Calu3 (cell line): ENCODE measurements at regions of chr17 and their contacts with region 1.

Region 1: DNA sequence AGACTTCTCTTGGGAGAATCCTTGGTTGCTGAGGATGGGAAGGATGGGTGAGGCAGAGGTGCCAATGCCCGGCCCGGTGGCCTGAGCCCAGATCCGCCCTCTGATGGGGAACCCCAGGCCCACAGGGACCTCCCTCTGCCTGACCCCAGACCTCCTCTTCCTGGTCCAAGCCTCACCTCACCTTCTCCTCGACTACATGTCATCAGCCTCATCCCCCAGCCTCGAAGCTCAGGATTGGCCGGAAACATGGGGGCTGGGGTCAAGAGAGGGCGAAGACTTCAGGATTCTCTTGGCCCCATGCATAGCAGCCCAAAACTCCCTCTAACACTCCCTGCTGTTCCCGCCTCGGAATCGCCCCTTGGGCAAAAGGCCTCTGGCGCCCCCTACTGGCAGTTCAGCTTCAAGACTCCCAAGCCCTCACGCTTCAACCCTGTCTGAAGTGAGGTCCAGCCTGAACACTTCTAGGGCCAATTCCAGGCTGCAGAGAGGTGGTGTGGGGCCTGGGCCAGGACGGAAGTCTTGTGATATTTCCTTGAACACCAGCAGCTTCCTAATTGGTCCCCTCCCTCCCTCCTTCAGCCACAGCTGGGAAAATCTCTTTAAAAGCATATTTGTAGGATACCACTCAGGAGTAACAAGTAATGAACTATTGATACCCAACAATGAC is 47.2 kb downstream of the ARHGAP27 start:
- DNase-seq: peak; percentile 97
- H3K4me3 Mint-ChIP-seq: no peak overlapping the region
- H3K27ac Mint-ChIP-seq: no peak overlapping the region
- H3K4me1 Mint-ChIP-seq: peaks cover 35% of the 10 kb centered on the region
- H3K27me3 Mint-ChIP-seq: peaks cover 22% of the 10 kb centered on the region
- CTCF ChIP-seq: peak; percentile 100

Region 2: GRCh38 chr17:45098869-45099616 is 286.4 kb before region 1 on chr17:
- CTCF ChIA-PET with region 1: no interaction called
- intact Hi-C with region 1: no loop called
- DNase-seq: peak; percentile 95
- H3K4me3 Mint-ChIP-seq: no peak overlapping the region
- H3K27ac Mint-ChIP-seq: peak overlapping the region; percentile 8
- H3K4me1 Mint-ChIP-seq: peaks cover 6% of the 10 kb centered on the region
- H3K27me3 Mint-ChIP-seq: no peaks in the 10 kb centered on the region
- CTCF ChIP-seq: peak; percentile 98

Region 3: GRCh38 chr17:45218895-45219661 is 166.4 kb before region 1 on chr17:
- CTCF ChIA-PET with region 1: interaction called, 6 read pairs
- intact Hi-C with region 1: loop called (anchors 1 kb)
- DNase-seq: peak; percentile 95
- H3K4me3 Mint-ChIP-seq: no peak overlapping the region
- H3K27ac Mint-ChIP-seq: no peak overlapping the region
- H3K4me1 Mint-ChIP-seq: no peaks in the 10 kb centered on the region
- H3K27me3 Mint-ChIP-seq: peaks cover 43% of the 10 kb centered on the region
- CTCF ChIP-seq: peak; percentile 98

Region 4: DNA sequence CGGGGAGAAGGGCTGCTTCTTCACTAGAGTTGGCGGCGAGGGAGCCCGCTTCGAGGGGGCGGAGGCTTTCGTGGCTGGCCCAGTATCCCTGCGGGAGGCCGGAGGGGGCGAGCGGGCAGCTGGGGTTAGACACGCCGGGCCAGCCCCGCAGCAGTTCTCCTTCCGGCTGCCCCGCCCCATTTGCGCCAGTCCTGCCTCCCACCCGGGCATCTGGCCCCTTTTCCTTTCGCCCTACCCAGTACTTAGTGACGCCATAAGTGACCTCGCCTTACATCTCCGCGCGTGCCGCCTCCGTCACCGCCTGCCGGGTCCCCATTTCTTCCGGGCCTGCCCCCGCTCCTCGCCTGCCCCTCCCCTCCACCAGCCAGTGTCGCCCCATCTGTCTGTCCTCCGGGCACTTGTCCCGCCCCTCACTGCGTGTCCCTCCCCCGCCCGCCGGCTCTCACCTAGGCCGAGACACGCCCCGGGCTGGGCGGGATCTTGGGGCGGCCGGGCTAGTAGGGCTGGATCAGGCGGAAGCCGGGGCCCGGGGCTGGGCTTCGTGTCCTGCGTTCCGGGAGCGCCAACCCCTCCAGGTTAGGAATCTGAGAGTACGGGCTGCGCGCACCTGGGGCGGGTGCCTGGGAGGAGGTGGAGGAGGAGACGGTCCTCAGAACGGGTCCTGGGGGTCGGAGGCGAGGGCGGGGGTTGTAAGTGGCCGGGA is 137.9 kb before region 1 on chr17:
- CTCF ChIA-PET with region 1: interaction called, 11 read pairs
- intact Hi-C with region 1: no loop called
- DNase-seq: peak; percentile 100
- H3K4me3 Mint-ChIP-seq: peak overlapping the region; percentile 97
- H3K27ac Mint-ChIP-seq: peak overlapping the region; percentile 89
- H3K4me1 Mint-ChIP-seq: peaks cover 10% of the 10 kb centered on the region
- H3K27me3 Mint-ChIP-seq: no peaks in the 10 kb centered on the region
- CTCF ChIP-seq: no peak

Region 5: GRCh38 chr17:45293413-45294211 is 91.9 kb before region 1 on chr17:
- CTCF ChIA-PET with region 1: interaction called, 13 read pairs
- intact Hi-C with region 1: loop called (anchors 1 kb)
- DNase-seq: peak; percentile 81
- H3K4me3 Mint-ChIP-seq: peak overlapping the region; percentile 21
- H3K27ac Mint-ChIP-seq: peak overlapping the region; percentile 66
- H3K4me1 Mint-ChIP-seq: peaks cover 73% of the 10 kb centered on the region
- H3K27me3 Mint-ChIP-seq: no peaks in the 10 kb centered on the region
- CTCF ChIP-seq: no peak

Region 6: GRCh38 chr17:45371414-45372327 is 13.8 kb before region 1 on chr17:
- CTCF ChIA-PET with region 1: interaction called, 21 read pairs
- intact Hi-C with region 1: no loop called
- DNase-seq: peak; percentile 100
- H3K4me3 Mint-ChIP-seq: peak overlapping the region; percentile 78
- H3K27ac Mint-ChIP-seq: peak overlapping the region; percentile 88
- H3K4me1 Mint-ChIP-seq: peaks cover 44% of the 10 kb centered on the region
- H3K27me3 Mint-ChIP-seq: no peaks in the 10 kb centered on the region
- CTCF ChIP-seq: no peak